ENCODE measurements at regions of chr16 and their contacts with region 1.

Region 1: DNA sequence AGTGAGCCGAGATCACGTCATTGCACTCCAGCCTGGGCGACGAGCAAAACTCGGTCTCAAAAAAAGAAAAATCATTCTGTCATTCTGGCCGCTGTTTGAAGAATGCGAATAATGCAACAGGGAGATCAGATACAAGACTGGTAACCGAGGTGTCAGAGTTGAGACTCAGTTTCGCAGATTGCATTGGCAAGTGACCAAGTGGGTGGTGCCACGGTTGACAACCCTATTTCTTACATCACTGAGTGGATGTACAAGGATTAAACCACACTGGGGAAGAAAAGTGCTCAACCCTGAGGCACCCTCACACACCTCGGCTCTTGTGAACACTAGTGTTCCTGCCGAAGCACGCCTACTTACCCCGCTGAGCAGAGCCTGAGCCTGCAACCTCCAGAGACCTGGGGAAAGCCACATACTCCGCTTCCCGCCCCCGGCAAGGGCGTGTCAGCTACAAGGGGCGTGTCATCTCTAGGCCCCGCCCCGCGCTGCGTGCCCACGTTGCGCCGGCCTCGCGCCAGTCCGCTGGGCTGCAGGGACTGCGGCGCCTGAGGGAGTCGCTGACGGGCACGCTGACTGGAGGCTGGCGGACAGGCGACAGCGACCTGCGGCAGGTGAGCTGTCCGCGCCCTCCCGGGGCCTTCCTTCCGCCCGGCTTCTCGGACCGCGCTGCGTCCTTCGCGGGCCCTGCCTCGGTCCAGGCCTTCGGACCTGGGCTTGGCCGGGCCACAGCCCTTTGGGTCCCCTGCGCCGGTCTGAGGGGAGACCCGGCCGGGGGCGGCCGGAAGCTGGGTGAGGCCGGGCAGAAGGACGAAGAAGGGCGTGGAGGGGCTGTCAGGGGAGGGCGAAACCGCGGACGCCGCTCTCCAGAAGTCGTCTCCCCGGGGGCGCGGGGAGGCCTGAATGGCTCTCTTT is at the start of gene HMOX2:
- DNase-seq: peak; percentile 87 to 93 (median 91)
- H3K4me3 ChIP-seq: peak within 1 kb of the TSS; percentile 55
- H3K4me3 Mint-ChIP-seq: peak within 1 kb of the TSS; percentile 92 to 99 (median 93)
- H3K27ac ChIP-seq: peak within 1 kb of the TSS; percentile 85
- H3K27ac Mint-ChIP-seq: peak within 1 kb of the TSS; percentile 85 to 97 (median 94)
- H3K4me1 ChIP-seq: peaks cover 44% of the 10 kb centered on the region
- H3K4me1 Mint-ChIP-seq: peaks cover 38 to 58% (median 52%) of the 10 kb centered on the region in 3 donors
- H3K27me3 ChIP-seq: no peaks in the 10 kb centered on the region
- H3K27me3 Mint-ChIP-seq: no peaks in the 10 kb centered on the region
- total RNA-seq, gene HMOX2: 87.5 to 95.2 TPM

Region 2: DNA sequence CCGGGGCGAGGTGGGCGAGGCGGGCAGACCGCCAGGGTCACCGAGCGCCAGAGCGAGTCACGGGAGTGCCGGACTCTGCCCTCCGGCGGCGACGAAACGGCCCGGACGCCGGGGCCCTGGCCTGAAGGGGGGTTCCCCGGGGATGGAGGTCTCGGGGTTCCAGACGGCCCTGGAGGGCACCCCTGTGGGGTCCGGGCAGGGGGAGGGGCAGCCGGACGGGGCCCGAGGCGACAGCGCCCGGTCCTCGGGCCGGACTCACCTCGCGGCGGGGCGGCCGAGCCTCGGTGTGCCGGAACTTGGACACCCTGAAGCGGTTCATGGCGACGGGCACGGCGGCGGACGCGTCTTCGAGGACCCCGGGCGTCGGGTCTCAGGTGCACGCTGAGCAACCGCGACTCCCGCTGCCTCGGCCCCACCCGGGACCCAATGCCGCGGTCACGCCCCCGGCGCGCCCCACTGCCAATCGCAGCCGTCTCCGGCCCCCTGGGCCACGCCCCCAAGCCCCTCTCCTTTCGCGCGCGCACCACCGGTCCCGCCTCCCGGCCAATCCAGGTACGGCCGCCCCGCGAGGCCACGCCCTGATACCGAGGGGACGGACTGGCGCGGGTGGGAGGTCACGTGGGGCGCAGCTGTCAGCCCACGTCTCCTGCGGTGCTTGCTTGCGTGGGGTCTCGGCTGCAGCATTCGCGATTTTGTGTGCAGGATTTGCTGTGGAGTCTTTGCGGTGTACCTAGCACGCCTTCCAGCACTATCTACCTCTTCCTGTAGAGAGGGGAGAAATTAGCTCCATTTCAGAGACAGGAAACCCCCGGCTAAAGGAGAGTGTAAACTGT is 59.7 kb before region 1 on chr16 and contains the start of gene CORO7:
- CTCF ChIA-PET with region 1: interaction called, 6 read pairs
- POLR2A ChIA-PET with region 1: interaction called, 18 read pairs
- DNase-seq: peak; percentile 99 to 100 (median 99)
- H3K4me3 ChIP-seq: peak within 1 kb of the TSS; percentile 88
- H3K4me3 Mint-ChIP-seq: peak within 1 kb of the TSS; percentile 89 to 98 (median 95)
- H3K27ac ChIP-seq: peak within 1 kb of the TSS; percentile 98
- H3K27ac Mint-ChIP-seq: peak within 1 kb of the TSS; percentile 91 to 100 (median 98)
- H3K4me1 ChIP-seq: peaks cover 40% of the 10 kb centered on the region
- H3K4me1 Mint-ChIP-seq: peaks cover 38 to 44% (median 40%) of the 10 kb centered on the region in 3 donors
- H3K27me3 ChIP-seq: no peaks in the 10 kb centered on the region
- H3K27me3 Mint-ChIP-seq: peaks cover 0 to 2% of the 10 kb centered on the region in 2 donors
- total RNA-seq, gene CORO7: 92.0 to 96.3 TPM

Region 3: DNA sequence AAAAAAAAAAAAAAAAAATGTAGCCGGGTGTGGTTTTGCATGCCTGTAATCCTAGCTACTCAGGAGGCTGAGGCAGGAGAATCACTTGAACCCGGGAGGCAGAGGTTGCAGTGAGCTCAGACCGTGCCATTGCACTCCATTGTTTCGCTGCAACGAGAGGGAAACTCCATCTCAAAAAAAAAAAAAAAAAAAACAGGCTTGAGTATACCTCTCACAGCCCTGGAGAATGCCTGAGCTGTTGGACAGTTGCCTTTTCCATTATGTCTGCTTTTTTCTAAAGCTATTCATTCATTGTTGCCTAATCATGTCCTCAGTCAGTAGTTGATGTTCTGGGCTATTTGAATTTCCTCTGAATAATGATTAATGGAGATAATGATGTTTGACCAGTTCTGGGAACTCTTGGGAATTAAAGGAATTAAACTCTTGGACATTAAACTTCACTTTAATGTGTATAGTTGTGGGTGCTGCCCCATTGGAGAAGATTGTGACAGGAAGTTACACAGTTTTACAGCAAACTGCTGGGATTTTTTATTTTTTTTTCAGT is 11.9 kb after region 1 on chr16:
- CTCF ChIA-PET with region 1: interaction called, 41 read pairs
- POLR2A ChIA-PET with region 1: interaction called, 4 read pairs
- DNase-seq: no peak
- H3K4me3 ChIP-seq: peak overlapping the region; percentile 20
- H3K4me3 Mint-ChIP-seq: peak overlapping the region; percentile 51 to 79 (median 70)
- H3K27ac ChIP-seq: peak overlapping the region; percentile 51
- H3K27ac Mint-ChIP-seq: peak overlapping the region; percentile 90 to 99 (median 94)
- H3K4me1 ChIP-seq: peaks cover 64% of the 10 kb centered on the region
- H3K4me1 Mint-ChIP-seq: peaks cover 51 to 74% (median 66%) of the 10 kb centered on the region in 3 donors
- H3K27me3 ChIP-seq: no peaks in the 10 kb centered on the region
- H3K27me3 Mint-ChIP-seq: no peaks in the 10 kb centered on the region

Region 4: GRCh38 chr16:4500272-4500671 is 24.1 kb after region 1 on chr16:
- CTCF ChIA-PET with region 1: interaction called, 87 read pairs
- POLR2A ChIA-PET with region 1: interaction called, 42 read pairs
- DNase-seq: no peak
- H3K4me3 ChIP-seq: no peak overlapping the region
- H3K4me3 Mint-ChIP-seq: no peak overlapping the region
- H3K27ac ChIP-seq: no peak overlapping the region
- H3K27ac Mint-ChIP-seq: peak overlapping the region in 7 of 8 donors; percentile 35 to 90 (median 76)
- H3K4me1 ChIP-seq: peaks cover 90% of the 10 kb centered on the region
- H3K4me1 Mint-ChIP-seq: peaks cover 70 to 90% (median 90%) of the 10 kb centered on the region in 3 donors
- H3K27me3 ChIP-seq: no peaks in the 10 kb centered on the region
- H3K27me3 Mint-ChIP-seq: no peaks in the 10 kb centered on the region

Region 5: DNA sequence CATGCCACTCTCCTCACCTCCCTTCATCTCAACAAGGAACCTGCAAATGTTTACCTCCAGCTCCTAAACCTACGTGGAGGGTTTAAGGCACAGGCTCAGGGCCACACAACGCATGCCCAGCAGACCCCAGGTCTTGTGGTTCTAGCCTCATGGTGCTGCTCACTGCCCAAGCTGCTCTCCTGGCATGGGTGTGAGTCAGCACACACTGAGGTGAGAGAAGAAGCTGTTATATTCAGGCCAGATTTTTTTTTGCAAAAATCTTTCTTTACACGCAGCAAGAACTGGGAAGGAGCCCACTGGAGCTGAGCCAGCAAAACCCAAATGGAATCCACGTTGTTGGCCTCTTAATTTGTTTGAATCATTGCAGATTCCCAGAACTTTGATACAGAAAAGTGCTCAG is 74.5 kb after region 1 on chr16:
- CTCF ChIA-PET with region 1: interaction called, 49 read pairs
- POLR2A ChIA-PET with region 1: interaction called, 9 read pairs
- DNase-seq: no peak
- H3K4me3 ChIP-seq: no peak overlapping the region
- H3K4me3 Mint-ChIP-seq: no peak overlapping the region
- H3K27ac ChIP-seq: no peak overlapping the region
- H3K27ac Mint-ChIP-seq: no peak overlapping the region
- H3K4me1 ChIP-seq: no peaks in the 10 kb centered on the region
- H3K4me1 Mint-ChIP-seq: peaks cover 2 to 5% (median 4%) of the 10 kb centered on the region in 3 donors
- H3K27me3 ChIP-seq: no peaks in the 10 kb centered on the region
- H3K27me3 Mint-ChIP-seq: peaks cover 0 to 2% of the 10 kb centered on the region in 2 donors

Region 6: GRCh38 chr16:4578961-4579530 is 102.9 kb after region 1 on chr16:
- CTCF ChIA-PET with region 1: no interaction called
- POLR2A ChIA-PET with region 1: no interaction called
- DNase-seq: no peak
- H3K4me3 ChIP-seq: no peak overlapping the region
- H3K4me3 Mint-ChIP-seq: no peak overlapping the region
- H3K27ac ChIP-seq: no peak overlapping the region
- H3K27ac Mint-ChIP-seq: no peak overlapping the region
- H3K4me1 ChIP-seq: no peaks in the 10 kb centered on the region
- H3K4me1 Mint-ChIP-seq: no peaks in the 10 kb centered on the region
- H3K27me3 ChIP-seq: no peaks in the 10 kb centered on the region
- H3K27me3 Mint-ChIP-seq: peaks cover 0 to 1% of the 10 kb centered on the region in 2 donors

Region 7: DNA sequence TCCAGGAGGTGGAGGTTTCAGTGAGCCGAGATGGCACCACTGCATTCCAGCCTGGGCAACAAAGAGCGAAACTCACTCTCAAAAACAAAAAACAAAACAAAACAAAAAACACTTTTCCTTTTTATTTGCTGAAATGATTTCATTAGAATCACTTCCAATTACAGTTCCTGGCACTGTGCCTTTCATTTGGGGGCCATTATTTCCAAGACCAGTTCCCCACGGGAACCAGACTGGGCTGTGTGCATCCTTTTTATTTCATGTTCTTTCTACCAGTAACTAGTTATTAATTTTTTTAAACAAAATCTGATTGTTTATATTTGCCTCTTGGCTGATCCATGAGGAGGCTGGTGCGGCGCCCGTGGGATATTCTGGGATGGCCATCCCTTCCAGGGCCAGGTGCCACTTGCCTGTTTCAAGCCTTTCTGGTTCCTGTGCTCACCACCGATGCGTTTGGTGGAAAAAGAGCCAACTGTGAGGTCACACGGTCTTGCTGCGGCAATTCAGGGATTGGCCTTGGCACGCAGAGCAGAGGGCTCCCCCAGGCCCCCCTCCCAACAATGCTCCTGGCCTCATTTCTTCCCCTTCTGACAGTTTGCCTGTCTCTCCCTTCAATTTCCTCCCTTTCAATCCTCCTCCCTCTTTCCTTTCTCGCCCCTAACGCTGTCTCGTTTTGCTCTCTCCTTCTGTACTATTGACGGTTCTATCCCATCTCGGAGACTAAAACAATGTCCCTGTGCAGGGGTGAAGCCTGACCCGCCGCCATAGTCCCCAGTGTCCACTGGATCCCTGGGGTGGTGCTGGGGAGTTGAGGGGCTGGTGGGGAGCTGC is 125.1 kb after region 1 on chr16:
- CTCF ChIA-PET with region 1: no interaction called
- POLR2A ChIA-PET with region 1: no interaction called
- DNase-seq: no peak
- H3K4me3 ChIP-seq: no peak overlapping the region
- H3K4me3 Mint-ChIP-seq: no peak overlapping the region
- H3K27ac ChIP-seq: no peak overlapping the region
- H3K27ac Mint-ChIP-seq: peak overlapping the region in 1 of 8 donors; percentile 70
- H3K4me1 ChIP-seq: no peaks in the 10 kb centered on the region
- H3K4me1 Mint-ChIP-seq: no peaks in the 10 kb centered on the region
- H3K27me3 ChIP-seq: no peaks in the 10 kb centered on the region
- H3K27me3 Mint-ChIP-seq: peaks cover 1 to 4% of the 10 kb centered on the region in 2 donors

Region 8: DNA sequence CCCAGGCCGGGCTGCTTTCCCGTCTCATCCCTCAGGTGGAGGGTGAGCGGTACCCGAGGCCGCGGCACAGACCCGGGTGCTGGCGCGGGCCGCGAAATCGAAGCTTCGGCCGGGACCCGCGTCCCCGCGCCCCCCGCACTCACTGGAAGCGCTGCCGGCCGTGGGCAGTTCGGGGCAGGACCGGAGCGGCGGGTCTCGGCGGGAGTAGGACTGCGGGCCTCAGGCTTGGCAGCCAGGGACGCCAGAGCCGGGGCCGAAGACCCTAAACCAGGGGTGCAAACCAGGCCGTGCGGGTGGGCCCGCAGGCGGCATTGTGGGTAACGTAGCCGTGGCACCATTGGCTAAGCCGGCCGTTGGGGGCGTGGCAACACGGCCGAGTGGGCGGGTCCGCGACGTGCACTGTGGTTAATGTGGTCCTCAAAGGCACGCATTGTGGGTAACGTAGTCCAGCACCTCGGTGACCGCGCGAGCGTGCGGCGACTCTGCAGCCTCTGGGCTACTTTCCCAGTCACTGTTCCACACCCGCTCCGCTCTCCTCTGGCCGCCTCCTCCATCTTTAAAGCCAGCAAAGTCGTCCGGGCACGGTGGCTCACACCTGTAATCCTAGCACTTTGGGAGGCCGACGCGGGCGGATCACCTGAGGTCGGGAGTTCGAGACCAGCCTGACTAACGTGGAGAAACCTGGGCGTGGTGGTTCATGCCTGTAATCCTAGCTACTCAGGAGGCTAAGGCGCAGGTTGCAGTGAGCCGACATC is 290.9 kb after region 1 on chr16 and contains the start of gene ZNF500:
- CTCF ChIA-PET with region 1: no interaction called
- POLR2A ChIA-PET with region 1: no interaction called
- DNase-seq: peak; percentile 89 to 93 (median 93)
- H3K4me3 ChIP-seq: peak within 1 kb of the TSS; percentile 95
- H3K4me3 Mint-ChIP-seq: peak within 1 kb of the TSS; percentile 88 to 99 (median 91)
- H3K27ac ChIP-seq: peak within 1 kb of the TSS; percentile 64
- H3K27ac Mint-ChIP-seq: peak within 1 kb of the TSS; percentile 85 to 98 (median 93)
- H3K4me1 ChIP-seq: peaks cover 24% of the 10 kb centered on the region
- H3K4me1 Mint-ChIP-seq: peaks cover 23 to 39% (median 35%) of the 10 kb centered on the region in 3 donors
- H3K27me3 ChIP-seq: no peaks in the 10 kb centered on the region
- H3K27me3 Mint-ChIP-seq: peaks cover 0 to 1% of the 10 kb centered on the region in 2 donors
- total RNA-seq, gene ZNF500: 12.7 to 13.7 TPM

Measured in CD8-positive, alpha-beta memory T cell (primary cell).